ENCODE measurements at regions of chr2 and their contacts with region 1.

Region 1: DNA sequence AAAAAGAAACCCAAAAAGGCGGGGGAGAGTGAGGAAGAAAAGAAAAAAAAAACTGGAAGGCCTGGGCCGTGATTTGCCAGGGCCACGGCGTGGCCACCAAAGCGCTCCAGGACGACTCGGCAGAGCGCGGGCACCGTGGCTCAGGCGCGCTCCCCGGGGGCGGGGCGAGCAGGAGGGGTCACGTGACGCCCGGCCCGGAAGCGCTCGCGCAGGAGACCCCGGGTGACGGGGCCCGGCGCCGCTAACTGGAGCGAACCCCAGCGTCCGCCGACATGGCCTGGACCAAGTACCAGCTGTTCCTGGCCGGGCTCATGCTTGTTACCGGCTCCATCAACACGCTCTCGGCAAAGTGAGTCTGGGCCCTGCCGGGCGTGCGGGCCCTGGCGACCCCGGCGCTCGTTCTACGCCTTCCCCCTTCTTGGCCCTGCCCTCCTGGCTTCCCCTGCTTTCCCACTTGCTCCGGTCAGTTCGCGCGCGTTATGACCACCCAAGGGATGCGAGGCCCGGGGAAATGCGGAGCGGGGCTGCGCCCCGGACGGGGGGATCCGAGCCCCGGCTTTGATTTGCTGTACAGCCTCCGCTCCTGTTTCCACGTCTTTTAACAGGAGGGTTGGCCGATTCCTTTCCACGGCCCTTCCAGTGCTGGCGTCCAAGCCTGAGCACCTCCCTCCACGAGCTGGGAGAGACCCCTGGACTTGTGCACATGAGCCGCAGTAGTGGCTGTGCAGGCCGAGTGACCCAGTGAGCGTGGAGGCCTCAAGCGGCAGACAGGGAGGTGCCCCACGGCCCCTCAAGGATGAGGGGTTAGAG is at the start of gene SLC35F6:
- DNase-seq: peak; percentile 88
- H3K4me3 Mint-ChIP-seq: peak within 1 kb of the TSS; percentile 89
- H3K27ac Mint-ChIP-seq: peak within 1 kb of the TSS; percentile 76
- H3K4me1 Mint-ChIP-seq: peaks cover 30% of the 10 kb centered on the region
- H3K27me3 Mint-ChIP-seq: no peaks in the 10 kb centered on the region
- CTCF ChIP-seq: no peak
- total RNA-seq, gene SLC35F6: 36.9 and 43.0 TPM in 2 replicates

Region 2: GRCh38 chr2:26345545-26346453 is 418.5 kb before region 1 on chr2 and contains the start of gene SELENOI:
- CTCF ChIA-PET with region 1: interaction called, 10 read pairs
- intact Hi-C with region 1: no loop called
- DNase-seq: peak; percentile 99
- H3K4me3 Mint-ChIP-seq: peak within 1 kb of the TSS; percentile 82
- H3K27ac Mint-ChIP-seq: peak within 1 kb of the TSS; percentile 82
- H3K4me1 Mint-ChIP-seq: peaks cover 34% of the 10 kb centered on the region
- H3K27me3 Mint-ChIP-seq: no peaks in the 10 kb centered on the region
- CTCF ChIP-seq: no peak
- total RNA-seq, gene SELENOI: 66.6 and 75.4 TPM in 2 replicates

Region 3: DNA sequence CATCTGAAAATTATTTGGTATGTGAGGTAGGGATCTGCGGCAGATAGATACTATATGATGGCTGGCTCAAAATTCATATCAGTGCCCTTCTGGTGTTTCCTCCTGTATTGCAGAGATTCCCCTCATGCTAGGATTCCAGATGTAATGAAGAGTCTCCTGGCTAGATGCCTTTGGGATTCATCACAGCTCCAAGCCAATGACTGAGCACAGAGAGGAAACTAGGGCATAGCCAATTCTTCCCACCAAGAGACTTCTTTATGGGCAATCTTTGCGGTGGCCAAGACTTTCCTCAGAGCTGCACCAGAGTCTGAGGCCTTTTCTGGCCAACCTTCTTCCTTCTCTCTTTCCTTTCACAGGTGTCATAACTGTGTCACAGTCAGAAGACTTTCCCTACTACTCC is 97.6 kb before region 1 on chr2:
- CTCF ChIA-PET with region 1: no interaction called
- intact Hi-C with region 1: no loop called
- DNase-seq: no peak
- H3K4me3 Mint-ChIP-seq: no peak overlapping the region
- H3K27ac Mint-ChIP-seq: no peak overlapping the region
- H3K4me1 Mint-ChIP-seq: peaks cover 11% of the 10 kb centered on the region
- H3K27me3 Mint-ChIP-seq: peaks cover 88% of the 10 kb centered on the region
- CTCF ChIP-seq: no peak